ENCODE measurements at regions of chr20 and their contacts with region 1.

Region 1: DNA sequence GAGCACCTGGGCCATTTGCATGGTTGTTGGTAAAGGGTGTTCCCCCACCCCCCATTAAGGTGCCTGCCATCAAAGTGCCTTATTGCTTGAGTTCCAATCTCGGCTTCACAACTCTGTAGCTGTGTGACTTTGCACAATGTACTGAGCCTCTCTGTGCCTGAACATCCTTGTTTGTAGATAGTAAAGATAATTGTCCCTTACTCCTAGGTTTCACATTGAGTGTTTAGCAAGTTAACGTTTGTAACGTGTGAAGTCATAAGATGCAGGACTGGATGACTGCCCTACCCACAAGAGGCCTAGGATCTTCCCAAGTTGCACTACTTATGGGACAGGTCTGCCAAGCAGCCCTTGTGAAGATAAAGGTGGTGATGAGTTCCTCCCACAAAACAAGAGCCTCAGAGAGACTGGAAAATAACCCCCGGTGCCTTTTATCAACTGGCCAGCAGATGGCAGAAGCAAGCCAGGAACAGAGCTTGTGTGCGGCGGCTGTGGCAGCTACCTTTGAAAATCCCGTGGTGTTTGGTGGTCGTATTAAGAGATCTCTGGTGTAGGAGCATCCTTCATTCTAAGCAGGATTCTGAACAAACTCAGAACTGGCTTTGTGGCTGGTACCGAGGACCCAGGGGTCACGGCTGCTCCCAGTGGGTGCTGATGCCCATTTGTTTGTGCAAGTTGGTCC is 99.0 kb downstream of the CDH26 start:
- DNase-seq: peak; percentile 32
- ATAC-seq: peak; percentile 57
- H3K4me3 Mint-ChIP-seq: peak overlapping the region; percentile 54
- H3K27ac Mint-ChIP-seq: peak overlapping the region; percentile 8
- H3K4me1 Mint-ChIP-seq: peaks cover 28% of the 10 kb centered on the region
- H3K27me3 Mint-ChIP-seq: peaks cover 13% of the 10 kb centered on the region
- CTCF ChIP-seq: no peak

Region 2: DNA sequence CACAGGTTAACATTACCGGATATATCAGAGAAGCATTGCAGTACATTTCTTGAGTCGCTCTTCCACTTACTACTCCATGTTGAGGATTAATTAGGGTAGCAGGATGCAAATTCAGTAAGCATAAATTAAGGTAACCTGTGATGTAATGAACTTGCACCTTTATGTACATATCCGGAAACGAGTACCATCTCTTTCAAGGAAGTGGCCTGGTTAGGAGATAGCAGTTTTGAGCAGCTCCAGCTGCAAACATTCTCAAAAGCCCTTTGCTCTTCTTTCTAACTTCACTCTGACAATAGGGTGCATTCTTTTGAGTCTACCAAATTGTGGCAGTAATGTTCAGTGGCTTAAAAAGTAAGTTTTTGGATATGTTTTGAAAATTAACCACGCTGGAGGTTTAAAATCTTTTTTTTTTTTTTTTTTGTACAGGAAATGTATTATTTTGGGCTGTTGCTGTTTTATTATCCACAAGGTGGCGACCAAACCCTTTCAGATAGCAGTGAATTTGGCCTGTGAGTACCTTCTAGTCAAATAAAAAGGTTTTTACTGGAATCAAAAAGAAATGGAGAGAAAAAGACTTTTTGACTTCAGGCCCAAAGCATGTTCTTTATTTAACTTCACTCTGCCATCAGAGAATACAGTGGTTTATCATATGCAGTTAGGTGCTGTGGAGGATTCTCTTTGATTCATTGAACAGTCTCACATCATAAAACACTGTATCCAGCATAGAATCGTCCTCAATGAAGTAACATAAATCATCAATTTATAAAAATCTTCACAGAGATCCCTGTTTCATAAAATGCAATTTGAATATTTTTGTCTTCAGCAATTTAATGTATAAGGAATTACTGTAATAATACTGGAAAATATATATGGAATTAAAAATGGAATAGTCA is 108.2 kb before region 1 on chr20:
- CTCF ChIA-PET with region 1: no interaction called
- POLR2A ChIA-PET with region 1: no interaction called
- intact Hi-C with region 1: loop called (anchors 5 kb)
- DNase-seq: no peak
- ATAC-seq: peak; percentile 37
- H3K4me3 Mint-ChIP-seq: peak overlapping the region; percentile 20
- H3K27ac Mint-ChIP-seq: peak overlapping the region; percentile 83
- H3K4me1 Mint-ChIP-seq: peaks cover 13% of the 10 kb centered on the region
- H3K27me3 Mint-ChIP-seq: no peaks in the 10 kb centered on the region
- CTCF ChIP-seq: peak; percentile 79

Region 3: DNA sequence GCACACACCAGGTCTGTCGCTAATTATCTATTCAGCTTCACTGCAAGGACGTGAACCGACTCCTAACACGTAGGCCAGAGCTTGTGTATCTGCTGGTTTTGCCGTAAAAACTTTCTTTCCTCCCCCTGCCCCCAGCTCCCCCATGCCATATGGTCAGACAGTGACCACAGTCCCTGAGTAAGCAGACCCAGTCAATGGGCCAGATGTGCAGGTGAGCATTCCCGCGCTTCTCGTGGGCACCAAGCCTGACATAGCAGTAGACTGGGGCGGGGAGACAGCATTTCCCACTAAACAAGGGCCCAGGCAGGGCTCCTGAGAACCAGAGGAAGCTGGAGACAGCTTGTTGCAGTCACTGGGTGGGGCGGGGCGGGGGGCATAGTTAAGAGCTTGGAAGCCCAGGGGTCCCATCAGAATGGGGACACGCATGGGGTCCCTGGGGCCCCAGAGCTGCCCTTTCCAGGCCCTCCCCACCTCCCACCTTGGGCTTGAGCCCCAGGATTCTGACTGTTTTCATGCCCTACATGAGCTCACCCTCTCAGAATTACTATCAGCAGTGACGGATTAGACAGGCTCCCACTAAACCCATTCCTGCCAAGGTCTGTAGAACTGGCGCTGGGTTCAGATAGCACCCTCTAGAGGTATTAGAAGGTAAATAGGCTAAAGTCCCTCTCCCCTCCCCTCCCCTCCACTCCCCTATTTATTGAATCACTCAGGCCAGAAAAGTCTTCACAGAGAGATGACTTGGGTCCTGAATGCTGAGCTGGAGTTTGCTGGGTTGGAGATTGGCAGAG is 47.2 kb before region 1 on chr20:
- CTCF ChIA-PET with region 1: no interaction called
- POLR2A ChIA-PET with region 1: no interaction called
- intact Hi-C with region 1: no loop called
- DNase-seq: no peak
- ATAC-seq: no peak
- H3K4me3 Mint-ChIP-seq: no peak overlapping the region
- H3K27ac Mint-ChIP-seq: no peak overlapping the region
- H3K4me1 Mint-ChIP-seq: no peaks in the 10 kb centered on the region
- H3K27me3 Mint-ChIP-seq: no peaks in the 10 kb centered on the region
- CTCF ChIP-seq: no peak

Region 4: GRCh38 chr20:60262967-60263603 is 205.8 kb after region 1 on chr20:
- CTCF ChIA-PET with region 1: interaction called, 14 read pairs
- POLR2A ChIA-PET with region 1: no interaction called
- intact Hi-C with region 1: no loop called
- DNase-seq: peak; percentile 20
- ATAC-seq: no peak
- H3K4me3 Mint-ChIP-seq: no peak overlapping the region
- H3K27ac Mint-ChIP-seq: no peak overlapping the region
- H3K4me1 Mint-ChIP-seq: no peaks in the 10 kb centered on the region
- H3K27me3 Mint-ChIP-seq: no peaks in the 10 kb centered on the region
- CTCF ChIP-seq: no peak

Region 5: DNA sequence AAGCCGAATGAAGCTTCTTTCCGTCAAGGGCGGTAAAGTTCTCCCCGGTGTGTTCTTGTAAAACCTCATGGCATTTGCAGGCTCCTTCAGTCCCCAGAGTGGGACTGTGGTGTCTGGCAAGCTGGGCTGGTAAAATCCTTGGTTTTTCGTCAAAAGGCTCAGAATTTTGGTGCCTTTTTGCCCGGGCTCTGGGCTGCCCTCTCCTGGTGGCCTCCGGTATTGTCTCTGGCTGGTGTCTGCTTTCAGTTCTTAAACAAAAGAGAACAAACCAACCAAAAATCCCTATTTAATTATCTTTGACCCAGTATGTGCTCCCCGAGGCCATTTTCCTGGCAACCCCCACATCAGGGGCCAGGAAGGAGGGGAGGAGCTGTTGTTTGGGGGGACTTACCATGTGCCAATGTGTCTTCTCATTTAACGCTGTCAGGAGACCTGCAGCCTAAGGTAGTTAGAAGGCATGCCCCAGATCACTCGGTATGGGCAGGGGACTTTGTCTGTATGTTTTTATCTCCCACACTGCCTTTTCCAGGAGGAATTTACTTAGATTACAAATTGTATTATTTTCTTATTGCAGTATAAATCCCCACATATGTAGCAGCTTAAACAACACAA is 1205.9 kb after region 1 on chr20:
- CTCF ChIA-PET with region 1: no interaction called
- POLR2A ChIA-PET with region 1: no interaction called
- intact Hi-C with region 1: loop called (anchors 5 kb)
- DNase-seq: no peak
- ATAC-seq: no peak
- H3K4me3 Mint-ChIP-seq: no peak overlapping the region
- H3K27ac Mint-ChIP-seq: no peak overlapping the region
- H3K4me1 Mint-ChIP-seq: no peaks in the 10 kb centered on the region
- H3K27me3 Mint-ChIP-seq: no peaks in the 10 kb centered on the region
- CTCF ChIP-seq: no peak

Region 6: DNA sequence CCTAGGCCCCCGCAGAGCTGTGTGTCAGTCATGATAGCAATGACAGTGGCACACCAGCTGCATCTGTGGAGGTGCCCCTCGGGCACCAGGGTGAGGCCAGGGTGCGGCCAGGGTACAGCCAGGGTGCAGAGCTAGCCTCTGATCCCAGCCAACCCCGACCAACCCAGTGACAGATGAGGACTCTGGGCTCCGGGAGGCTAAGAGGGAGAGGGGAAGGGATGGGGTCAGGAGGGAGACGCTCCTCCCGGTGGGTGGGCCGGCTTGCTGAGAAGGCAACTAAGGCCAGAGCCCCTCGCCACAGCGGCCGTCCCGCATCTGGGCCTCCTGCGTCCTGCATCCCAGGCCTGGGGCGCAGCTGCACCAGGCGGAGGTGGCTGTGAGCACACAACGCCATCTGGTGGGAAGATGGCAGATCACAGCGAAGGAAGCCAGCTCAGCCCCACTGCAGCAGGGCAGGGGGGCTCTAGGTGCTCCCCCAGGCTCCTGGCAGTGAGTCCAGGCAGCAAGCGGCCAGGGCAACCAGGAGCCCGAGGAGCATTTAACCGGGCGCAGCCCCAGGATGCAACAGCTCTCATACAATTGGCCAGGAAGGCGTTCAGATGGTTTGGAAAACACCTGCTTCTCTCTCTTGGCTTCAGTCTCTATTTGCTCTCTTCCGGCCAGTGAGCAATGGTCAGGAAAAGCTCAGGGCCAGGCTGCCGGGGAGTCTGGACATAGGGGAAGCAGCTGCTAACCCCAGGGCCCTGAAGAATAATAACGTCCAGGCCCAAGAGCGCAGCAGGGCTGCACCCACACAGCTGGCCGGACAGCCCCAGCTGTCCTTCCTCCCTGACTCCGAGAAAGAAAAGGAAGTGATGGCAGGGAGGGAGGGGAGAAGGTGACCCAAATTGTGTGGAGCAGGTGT is 1839.0 kb after region 1 on chr20:
- CTCF ChIA-PET with region 1: interaction called, 16 read pairs
- POLR2A ChIA-PET with region 1: no interaction called
- intact Hi-C with region 1: no loop called
- DNase-seq: no peak
- ATAC-seq: no peak
- H3K4me3 Mint-ChIP-seq: no peak overlapping the region
- H3K27ac Mint-ChIP-seq: no peak overlapping the region
- H3K4me1 Mint-ChIP-seq: no peaks in the 10 kb centered on the region
- H3K27me3 Mint-ChIP-seq: peaks cover 3% of the 10 kb centered on the region
- CTCF ChIP-seq: no peak